ENCODE measurements at regions of chr16 and their contacts with region 1.

Region 1: GRCh38 chr16:57462209-57462977 is at the start of gene POLR2C:
- DNase-seq: peak; percentile 88 to 94 (median 90)
- ATAC-seq: peak; percentile 98
- H3K4me3 ChIP-seq: peak within 1 kb of the TSS; percentile 64
- H3K27ac ChIP-seq: peak within 1 kb of the TSS; percentile 57
- H3K4me1 ChIP-seq: peaks cover 3 to 4% of the 10 kb centered on the region in 2 experiments; a peak in 3 of 5 replicates
- H3K27me3 ChIP-seq: no peaks in the 10 kb centered on the region
- CTCF ChIP-seq: peak; percentile 93 to 97 (median 94)
- EP300 ChIP-seq: peak; percentile 27; the same call in 1 of the 2 replicates
- POLR2A ChIP-seq: peak; percentile 97
- RAD21 ChIP-seq: peak; percentile 31 to 35; a peak in 3 of 4 replicates
- polyA plus RNA-seq, gene POLR2C: 70.3 to 87.4 TPM

Region 2: DNA sequence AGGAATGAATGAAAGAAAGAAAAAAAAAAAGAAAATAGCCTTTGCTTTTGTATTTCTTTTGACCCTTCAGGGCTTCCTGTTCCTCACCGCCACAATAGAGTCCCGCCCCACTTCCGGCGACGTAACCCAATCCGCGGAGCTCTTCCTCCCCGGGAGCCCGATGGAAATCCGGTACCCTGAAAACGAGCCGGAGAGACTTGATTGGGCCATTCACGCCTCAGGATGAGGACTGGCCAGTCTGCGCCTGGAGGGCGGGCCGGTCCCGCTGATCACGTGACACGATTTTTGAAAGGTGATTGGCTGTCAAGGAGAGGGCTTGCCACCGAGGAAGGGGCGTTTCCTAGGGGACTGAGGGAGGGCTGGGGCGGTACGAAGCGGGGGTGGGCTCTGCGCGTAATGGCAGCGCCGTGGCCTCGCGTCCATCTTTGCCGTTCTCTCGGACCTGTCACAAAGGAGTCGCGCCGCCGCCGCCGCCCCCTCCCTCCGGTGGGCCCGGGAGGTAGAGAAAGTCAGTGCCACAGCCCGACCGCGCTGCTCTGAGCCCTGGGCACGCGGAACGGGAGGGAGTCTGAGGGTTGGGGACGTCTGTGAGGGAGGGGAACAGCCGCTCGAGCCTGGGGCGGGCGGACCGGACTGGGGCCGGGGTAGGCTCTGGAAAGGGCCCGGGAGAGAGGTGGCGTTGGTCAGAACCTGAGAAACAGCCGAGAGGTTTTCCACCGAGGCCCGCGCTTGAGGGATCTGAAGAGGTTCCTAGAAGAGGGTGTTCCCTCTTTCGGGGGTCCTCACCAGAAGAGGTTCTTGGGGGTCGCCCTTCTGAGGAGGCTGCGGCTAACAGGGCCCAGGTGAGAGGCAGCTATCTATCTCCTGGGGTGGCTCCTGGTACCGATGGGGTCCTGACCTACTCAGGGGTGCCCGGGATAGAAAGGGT is 276.2 kb before region 1 on chr16 and contains the starts of genes PSME3IP1 and RSPRY1:
- CTCF ChIA-PET with region 1: no interaction called
- POLR2A ChIA-PET with region 1: no interaction called
- in situ Hi-C with region 1: no loop called
- intact Hi-C with region 1: no loop called
- DNase-seq: peak; percentile 99 to 100 (median 100)
- ATAC-seq: peak; percentile 94
- H3K4me3 ChIP-seq: peak within 1 kb of the TSS; percentile 94
- H3K27ac ChIP-seq: peak within 1 kb of the TSS; percentile 93
- H3K4me1 ChIP-seq: peaks cover 6 to 9% of the 10 kb centered on the region in 2 experiments
- H3K27me3 ChIP-seq: no peaks in the 10 kb centered on the region
- CTCF ChIP-seq: no peak
- EP300 ChIP-seq: no peak
- POLR2A ChIP-seq: peak; percentile 88
- RAD21 ChIP-seq: no peak
- polyA plus RNA-seq, gene PSME3IP1: 63.8 to 142 TPM
- polyA plus RNA-seq, gene RSPRY1: 10.2 to 13.4 TPM

Region 3: GRCh38 chr16:57447186-57447962 is 15.0 kb before region 1 on chr16 and contains the starts of genes CIAPIN1 and COQ9:
- CTCF ChIA-PET with region 1: no interaction called
- POLR2A ChIA-PET with region 1: interaction called, 12 read pairs
- in situ Hi-C with region 1: no loop called
- intact Hi-C with region 1: no loop called
- DNase-seq: peak; percentile 93 to 96 (median 94)
- ATAC-seq: peak; percentile 99
- H3K4me3 ChIP-seq: peak within 1 kb of the TSS; percentile 88
- H3K27ac ChIP-seq: peak within 1 kb of the TSS; percentile 93
- H3K4me1 ChIP-seq: peaks cover 11 to 15% of the 10 kb centered on the region in 2 experiments; a peak in 3 of 5 replicates
- H3K27me3 ChIP-seq: no peaks in the 10 kb centered on the region
- CTCF ChIP-seq: peak in 1 of 3 experiments; percentile 38; a peak in 2 of 6 replicates
- EP300 ChIP-seq: 0 out of 2 replicates have a peak, but pooled peaks have one; percentile 5
- POLR2A ChIP-seq: peak; percentile 93
- RAD21 ChIP-seq: no peak
- polyA plus RNA-seq, gene CIAPIN1: 256 to 263 TPM
- polyA plus RNA-seq, gene COQ9: 35.0 to 55.2 TPM

Region 4: GRCh38 chr16:57475711-57476339 is 13.4 kb after region 1 on chr16:
- CTCF ChIA-PET with region 1: no interaction called
- POLR2A ChIA-PET with region 1: interaction called, 14 read pairs
- in situ Hi-C with region 1: no loop called
- intact Hi-C with region 1: no loop called
- DNase-seq: peak; percentile 88 to 92 (median 91)
- ATAC-seq: peak; percentile 96
- H3K4me3 ChIP-seq: no peak overlapping the region
- H3K27ac ChIP-seq: no peak overlapping the region
- H3K4me1 ChIP-seq: peaks cover 21 to 46% of the 10 kb centered on the region in 2 experiments
- H3K27me3 ChIP-seq: no peaks in the 10 kb centered on the region
- CTCF ChIP-seq: peak; percentile 84 to 88 (median 88)
- EP300 ChIP-seq: no peak
- POLR2A ChIP-seq: no peak
- RAD21 ChIP-seq: peak; percentile 59 to 72; a peak in 3 of 4 replicates